CD4-positive, alpha-beta memory T cell (primary cell): ENCODE measurements at regions of chr4 and their contacts with region 1.

Region 1: GRCh38 chr4:105140684-105141490 is 5.8 kb upstream of the TET2 start:
- DNase-seq: peak; percentile 39 to 63 (median 60)
- H3K4me3 ChIP-seq: no peak overlapping the region
- H3K4me3 Mint-ChIP-seq: no peak overlapping the region
- H3K27ac ChIP-seq: no peak overlapping the region
- H3K27ac Mint-ChIP-seq: peak overlapping the region in 1 of 7 donors; percentile 2
- H3K4me1 ChIP-seq: peaks cover 5% of the 10 kb centered on the region
- H3K4me1 Mint-ChIP-seq: peaks cover 7 to 12% (median 8%) of the 10 kb centered on the region in 4 donors
- H3K27me3 ChIP-seq: no peaks in the 10 kb centered on the region
- H3K27me3 Mint-ChIP-seq: no peaks in the 10 kb centered on the region

Region 2: GRCh38 chr4:104818579-104818978 is 322.3 kb before region 1 on chr4:
- CTCF ChIA-PET with region 1: no interaction called
- POLR2A ChIA-PET with region 1: no interaction called
- intact Hi-C with region 1: no loop called
- DNase-seq: no peak
- H3K4me3 ChIP-seq: no peak overlapping the region
- H3K4me3 Mint-ChIP-seq: no peak overlapping the region
- H3K27ac ChIP-seq: no peak overlapping the region
- H3K27ac Mint-ChIP-seq: no peak overlapping the region
- H3K4me1 ChIP-seq: no peaks in the 10 kb centered on the region
- H3K4me1 Mint-ChIP-seq: no peaks in the 10 kb centered on the region
- H3K27me3 ChIP-seq: no peaks in the 10 kb centered on the region
- H3K27me3 Mint-ChIP-seq: no peaks in the 10 kb centered on the region

Region 3: GRCh38 chr4:105088110-105088879 is 52.6 kb before region 1 on chr4:
- CTCF ChIA-PET with region 1: no interaction called
- POLR2A ChIA-PET with region 1: no interaction called
- intact Hi-C with region 1: no loop called
- DNase-seq: no peak
- H3K4me3 ChIP-seq: no peak overlapping the region
- H3K4me3 Mint-ChIP-seq: no peak overlapping the region
- H3K27ac ChIP-seq: no peak overlapping the region
- H3K27ac Mint-ChIP-seq: no peak overlapping the region
- H3K4me1 ChIP-seq: no peaks in the 10 kb centered on the region
- H3K4me1 Mint-ChIP-seq: no peaks in the 10 kb centered on the region
- H3K27me3 ChIP-seq: no peaks in the 10 kb centered on the region
- H3K27me3 Mint-ChIP-seq: peaks cover 5% of the 10 kb centered on the region in 2 donors

Region 4: DNA sequence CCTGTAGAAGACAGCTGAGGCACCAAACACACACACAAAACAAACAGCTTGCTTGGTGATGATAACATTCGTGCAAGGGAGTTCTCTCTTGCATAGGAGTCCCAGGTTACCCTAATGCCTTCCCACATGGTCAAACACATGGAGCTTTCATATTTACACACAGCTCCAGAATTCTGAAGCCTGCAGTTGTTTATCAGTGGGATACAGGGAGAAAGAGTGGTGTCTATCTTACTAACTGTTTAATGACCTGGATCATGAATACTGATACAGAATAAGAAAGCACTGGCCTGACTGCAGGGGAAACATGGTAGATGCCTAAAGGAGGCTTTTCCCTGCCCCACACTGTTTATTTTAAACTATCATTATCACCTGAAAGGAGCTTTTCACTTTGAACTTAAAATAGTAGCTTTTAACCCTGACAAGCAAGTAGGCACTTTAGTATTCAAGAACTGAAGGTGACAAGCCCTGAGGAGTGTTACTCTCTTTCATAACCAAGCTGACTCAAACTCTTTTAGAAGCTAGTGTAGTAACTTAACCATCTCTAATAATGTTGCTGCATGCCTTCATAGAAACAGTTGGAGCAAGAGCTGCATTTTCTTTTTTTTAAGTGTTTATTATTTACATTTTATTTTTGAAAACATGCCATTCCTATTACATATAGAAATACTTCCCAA is 21.4 kb after region 1 on chr4:
- CTCF ChIA-PET with region 1: interaction called, 16 read pairs
- POLR2A ChIA-PET with region 1: no interaction called
- intact Hi-C with region 1: no loop called
- DNase-seq: no peak
- H3K4me3 ChIP-seq: no peak overlapping the region
- H3K4me3 Mint-ChIP-seq: no peak overlapping the region
- H3K27ac ChIP-seq: no peak overlapping the region
- H3K27ac Mint-ChIP-seq: no peak overlapping the region
- H3K4me1 ChIP-seq: peaks cover 7% of the 10 kb centered on the region
- H3K4me1 Mint-ChIP-seq: peaks cover 11 to 26% (median 24%) of the 10 kb centered on the region in 4 donors
- H3K27me3 ChIP-seq: no peaks in the 10 kb centered on the region
- H3K27me3 Mint-ChIP-seq: no peaks in the 10 kb centered on the region

Region 5: GRCh38 chr4:105196523-105197145 is 55.7 kb after region 1 on chr4:
- CTCF ChIA-PET with region 1: interaction called, 4 read pairs
- POLR2A ChIA-PET with region 1: no interaction called
- intact Hi-C with region 1: loop called (anchors 5 kb)
- DNase-seq: no peak
- H3K4me3 ChIP-seq: no peak overlapping the region
- H3K4me3 Mint-ChIP-seq: no peak overlapping the region
- H3K27ac ChIP-seq: no peak overlapping the region
- H3K27ac Mint-ChIP-seq: no peak overlapping the region
- H3K4me1 ChIP-seq: peaks cover 2% of the 10 kb centered on the region
- H3K4me1 Mint-ChIP-seq: peaks cover 24 to 30% (median 27%) of the 10 kb centered on the region in 4 donors
- H3K27me3 ChIP-seq: no peaks in the 10 kb centered on the region
- H3K27me3 Mint-ChIP-seq: no peaks in the 10 kb centered on the region

Region 6: DNA sequence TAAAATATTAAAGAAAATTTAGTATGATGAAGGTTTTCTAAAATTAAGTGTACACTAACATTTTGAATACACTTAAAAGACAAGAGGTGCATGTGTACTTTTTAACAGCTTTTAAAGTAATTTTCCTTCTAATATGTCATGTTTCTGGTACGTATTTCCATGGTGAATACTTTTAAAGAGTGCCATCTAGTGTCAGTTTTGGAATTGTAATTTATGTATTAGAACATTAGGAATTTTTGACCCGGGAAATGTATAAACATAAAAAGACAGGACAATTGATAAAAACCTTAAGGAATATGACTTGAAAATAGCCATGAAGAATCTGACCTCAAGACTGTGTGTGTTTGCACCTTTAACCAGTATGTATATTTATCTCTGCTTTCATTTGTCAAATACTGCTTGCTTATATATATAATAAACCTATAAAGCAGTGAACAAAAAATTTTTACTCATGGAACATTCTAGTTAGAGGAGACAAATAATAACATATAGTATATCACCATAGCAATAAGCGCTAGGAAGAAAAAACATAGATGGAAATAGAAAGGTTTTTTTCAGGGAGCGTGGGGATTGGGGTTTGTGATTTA is 574.9 kb after region 1 on chr4:
- CTCF ChIA-PET with region 1: interaction called, 5 read pairs
- POLR2A ChIA-PET with region 1: no interaction called
- intact Hi-C with region 1: loop called (anchors 1 kb)
- DNase-seq: peak in 4 of 5 donors; percentile 17 to 19 (median 18)
- H3K4me3 ChIP-seq: no peak overlapping the region
- H3K4me3 Mint-ChIP-seq: peak overlapping the region in 1 of 8 donors; percentile 26
- H3K27ac ChIP-seq: no peak overlapping the region
- H3K27ac Mint-ChIP-seq: peak overlapping the region in 1 of 7 donors; percentile 80
- H3K4me1 ChIP-seq: peaks cover 4% of the 10 kb centered on the region
- H3K4me1 Mint-ChIP-seq: peaks cover 0 to 2% (median 1%) of the 10 kb centered on the region in 4 donors
- H3K27me3 ChIP-seq: no peaks in the 10 kb centered on the region
- H3K27me3 Mint-ChIP-seq: no peaks in the 10 kb centered on the region